Tibial artery (tissue), 4 donors: ENCODE measurements at regions of chr5 and their contacts with region 1.

Region 1: GRCh38 chr5:131796793-131797693 is at the start of gene FNIP1:
- DNase-seq: peak; percentile 100
- H3K4me3 ChIP-seq: peak within 1 kb of the TSS; percentile 75 to 86
- H3K27ac ChIP-seq: peak within 1 kb of the TSS; percentile 95 to 100
- H3K4me1 ChIP-seq: peaks cover 0 to 38% (median 18%) of the 10 kb centered on the region in 4 donors
- H3K27me3 ChIP-seq: no peaks in the 10 kb centered on the region
- CTCF ChIP-seq: no peak

Region 2: DNA sequence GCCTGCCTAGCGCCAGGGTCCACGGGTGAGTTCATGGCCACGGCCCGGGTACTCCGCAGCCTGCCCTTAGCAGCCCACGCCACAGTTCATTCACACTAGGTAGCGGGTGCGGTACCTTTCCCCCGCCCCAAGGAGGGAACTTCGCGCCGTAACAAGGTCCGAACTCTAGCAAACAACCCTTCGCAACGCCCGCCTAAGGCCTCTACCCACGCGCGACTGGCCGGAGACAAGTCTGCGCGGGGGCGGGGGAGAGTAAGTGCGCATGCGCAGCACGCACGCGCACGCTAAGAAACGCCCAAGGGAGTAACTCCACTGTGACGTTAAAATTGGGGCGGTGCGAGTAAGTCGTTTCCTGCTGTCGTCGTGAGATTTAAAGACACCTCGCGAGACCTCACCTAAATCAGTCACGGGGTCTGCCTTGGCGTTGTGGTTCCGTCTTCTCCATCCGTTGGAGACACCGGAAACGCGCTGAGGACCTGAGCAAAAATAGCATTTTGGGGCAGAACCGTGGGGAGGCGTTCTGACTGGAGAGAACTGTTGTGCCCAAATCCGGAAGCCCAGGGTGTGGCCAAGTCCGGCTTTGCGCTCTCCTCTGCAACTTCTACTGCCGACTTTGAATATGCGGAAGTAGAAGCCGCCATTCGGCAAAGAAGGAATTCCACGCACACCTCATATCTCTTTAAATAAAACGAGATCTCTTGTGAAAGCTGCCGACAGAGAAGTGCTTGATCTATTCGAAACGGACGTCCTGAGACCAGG is 161.9 kb before region 1 on chr5 and contains the start of gene RAPGEF6:
- intact Hi-C with region 1: loop called (anchors 2 kb)
- DNase-seq: peak; percentile 99 to 100
- H3K4me3 ChIP-seq: peak within 1 kb of the TSS; percentile 76 to 89
- H3K27ac ChIP-seq: peak within 1 kb of the TSS; percentile 95 to 98
- H3K4me1 ChIP-seq: peaks cover 0 to 37% (median 25%) of the 10 kb centered on the region in 4 donors
- H3K27me3 ChIP-seq: no peaks in the 10 kb centered on the region
- CTCF ChIP-seq: peak; percentile 2 to 35

Region 3: DNA sequence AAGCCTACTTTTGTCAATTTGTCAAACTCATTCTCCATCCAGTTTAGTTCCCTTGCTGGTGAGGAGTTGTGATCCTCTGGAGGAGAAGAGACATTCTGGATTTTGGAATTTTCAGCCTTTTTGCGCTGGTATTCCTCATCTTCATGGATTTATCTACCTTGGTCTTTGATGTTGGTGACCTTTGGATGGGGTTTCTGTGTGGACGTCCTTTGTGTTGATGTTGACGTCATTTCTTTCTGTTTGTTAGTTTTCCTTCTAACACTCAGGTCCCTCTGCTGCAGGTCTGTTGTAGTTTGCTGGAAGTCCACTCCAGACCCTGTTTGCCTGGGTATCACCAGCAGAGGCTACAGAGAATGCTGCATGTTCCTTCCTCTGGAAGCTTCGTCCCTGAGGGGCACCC is 359.4 kb after region 1 on chr5:
- intact Hi-C with region 1: no loop called
- DNase-seq: no peak
- H3K4me3 ChIP-seq: no peak overlapping the region
- H3K27ac ChIP-seq: no peak overlapping the region
- H3K4me1 ChIP-seq: no peaks in the 10 kb centered on the region
- H3K27me3 ChIP-seq: no peaks in the 10 kb centered on the region
- CTCF ChIP-seq: no peak